Activated CD4-positive, alpha-beta T cell treated with anti-CD3 and anti-CD28 coated beads for 36 hours (primary cell): ENCODE measurements at regions of chr7 and their contacts with region 1.

Region 1: DNA sequence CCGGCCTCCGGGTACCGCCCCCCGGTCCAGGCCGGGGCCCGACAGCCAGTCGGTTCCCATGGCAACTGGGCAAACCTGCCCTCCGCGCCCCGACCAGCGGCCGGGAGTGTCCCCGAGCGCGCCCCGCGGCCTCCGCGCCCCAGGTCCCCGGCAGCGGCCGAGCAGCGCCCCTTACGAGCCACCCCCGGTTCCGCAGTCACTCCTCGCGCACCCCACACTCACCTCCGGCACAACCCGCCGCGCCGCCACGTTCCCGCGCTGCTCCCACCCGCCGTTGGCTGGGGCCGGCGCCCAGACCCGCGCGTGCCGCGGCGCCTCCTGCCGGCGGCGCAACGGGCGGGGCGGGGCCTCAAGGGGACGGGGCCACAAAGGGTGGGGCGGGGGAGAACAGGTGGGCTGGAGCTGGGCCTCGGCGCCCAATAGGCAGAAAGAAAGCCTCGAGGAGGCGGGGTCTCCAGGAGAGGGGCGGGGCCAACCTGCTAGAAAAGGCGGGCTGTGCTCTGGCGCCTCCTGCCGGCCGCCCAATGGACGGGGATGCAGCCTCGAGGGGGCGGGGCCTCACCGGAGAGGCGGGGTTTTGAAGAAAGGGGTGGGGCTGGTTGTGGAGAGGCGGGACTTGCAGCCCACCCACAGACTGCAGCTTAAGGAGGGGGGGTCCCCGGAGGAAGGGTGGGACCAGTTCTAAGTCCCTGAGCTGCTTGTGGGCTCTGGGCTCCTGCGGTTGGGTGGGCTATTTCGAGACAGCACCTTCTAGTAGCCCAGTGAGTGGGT is at the start of gene RADIL:
- DNase-seq: peak; percentile 98
- ATAC-seq: peak; percentile 100
- H3K4me3 Mint-ChIP-seq: peak within 1 kb of the TSS; percentile 64
- H3K27ac Mint-ChIP-seq: no peak within 1 kb of the TSS
- H3K4me1 Mint-ChIP-seq: peaks cover 10% of the 10 kb centered on the region
- H3K27me3 Mint-ChIP-seq: peaks cover 20% of the 10 kb centered on the region
- total RNA-seq, gene RADIL: 0.42 to 0.69 TPM

Region 2: DNA sequence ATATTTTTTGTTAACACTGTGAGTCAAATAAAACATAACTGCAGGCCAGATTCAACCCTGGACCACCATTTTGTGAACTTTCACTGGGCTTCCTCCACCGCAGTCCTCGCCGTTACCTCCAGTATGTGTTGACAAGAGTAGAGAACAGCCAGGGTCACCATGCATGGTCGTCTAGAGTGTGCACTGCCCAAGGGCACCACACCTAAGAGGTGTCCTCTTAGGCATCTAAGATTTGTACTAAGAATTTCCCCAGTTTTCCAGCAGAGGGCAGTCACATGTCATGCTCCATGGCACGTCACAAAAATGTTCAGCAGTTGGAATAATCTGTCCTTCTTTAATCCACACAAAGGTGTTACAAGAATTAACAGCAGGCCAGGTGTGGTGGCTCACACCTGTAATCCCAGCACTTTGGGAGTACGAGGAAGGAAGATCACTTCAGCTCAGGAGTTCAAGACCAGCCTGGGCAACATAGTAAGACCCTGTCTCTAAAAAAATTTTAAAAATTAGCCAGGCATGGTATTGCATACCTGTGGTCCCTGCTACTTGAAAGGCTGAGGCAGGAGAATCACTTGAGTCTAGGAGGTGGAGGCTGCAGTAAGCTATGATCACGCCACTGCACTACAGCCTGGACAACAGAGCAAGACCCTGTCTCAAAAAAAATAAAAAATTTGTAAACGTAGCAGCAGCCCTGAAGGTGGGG is 272.6 kb before region 1 on chr7:
- CTCF ChIA-PET with region 1: no interaction called
- POLR2A ChIA-PET with region 1: no interaction called
- intact Hi-C with region 1: loop called in 1 of 2 experiments (anchors 1 kb)
- DNase-seq: peak; percentile 59
- ATAC-seq: peak; percentile 77
- H3K4me3 Mint-ChIP-seq: no peak overlapping the region
- H3K27ac Mint-ChIP-seq: no peak overlapping the region
- H3K4me1 Mint-ChIP-seq: peaks cover 14% of the 10 kb centered on the region
- H3K27me3 Mint-ChIP-seq: no peaks in the 10 kb centered on the region

Region 3: GRCh38 chr7:4681886-4682620 is 201.5 kb before region 1 on chr7 and contains the start of gene FOXK1:
- CTCF ChIA-PET with region 1: no interaction called
- POLR2A ChIA-PET with region 1: no interaction called
- intact Hi-C with region 1: loop called in 1 of 2 experiments (anchors 2 kb)
- DNase-seq: peak; percentile 90
- ATAC-seq: peak; percentile 78
- H3K4me3 Mint-ChIP-seq: peak within 1 kb of the TSS; percentile 91
- H3K27ac Mint-ChIP-seq: peak within 1 kb of the TSS; percentile 98
- H3K4me1 Mint-ChIP-seq: peaks cover 30% of the 10 kb centered on the region
- H3K27me3 Mint-ChIP-seq: no peaks in the 10 kb centered on the region
- total RNA-seq, gene FOXK1: 30.0 to 33.9 TPM

Region 4: GRCh38 chr7:4791738-4792536 is 91.6 kb before region 1 on chr7:
- CTCF ChIA-PET with region 1: interaction called, 24 read pairs
- POLR2A ChIA-PET with region 1: no interaction called
- intact Hi-C with region 1: loop called (anchors 1 kb)
- DNase-seq: peak; percentile 93
- ATAC-seq: peak; percentile 93
- H3K4me3 Mint-ChIP-seq: no peak overlapping the region
- H3K27ac Mint-ChIP-seq: no peak overlapping the region
- H3K4me1 Mint-ChIP-seq: peaks cover 6% of the 10 kb centered on the region
- H3K27me3 Mint-ChIP-seq: no peaks in the 10 kb centered on the region

Region 5: DNA sequence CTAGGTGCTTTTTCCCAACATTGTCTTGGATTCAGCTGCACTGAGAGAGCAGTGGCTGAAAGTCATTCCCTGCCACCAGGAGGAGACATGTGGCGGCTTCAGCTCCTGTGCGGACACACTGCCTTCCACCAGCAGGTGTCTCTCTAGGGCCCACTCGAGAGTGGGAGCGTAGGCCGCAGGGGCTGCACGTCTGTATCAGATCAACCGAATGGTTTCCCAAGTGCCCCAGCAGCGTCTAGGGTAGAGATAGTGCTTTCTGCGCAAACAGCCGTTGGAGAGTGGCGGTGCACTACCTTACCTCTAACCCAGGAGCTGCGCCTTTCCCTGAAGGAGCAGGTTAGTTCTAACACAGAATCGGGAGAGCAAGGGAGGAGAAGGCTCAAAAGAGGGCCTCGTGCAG is 53.4 kb before region 1 on chr7:
- CTCF ChIA-PET with region 1: interaction called, 10 read pairs
- POLR2A ChIA-PET with region 1: no interaction called
- intact Hi-C with region 1: loop called in 1 of 2 experiments (anchors 1 kb)
- DNase-seq: peak; percentile 81
- ATAC-seq: peak; percentile 93
- H3K4me3 Mint-ChIP-seq: no peak overlapping the region
- H3K27ac Mint-ChIP-seq: no peak overlapping the region
- H3K4me1 Mint-ChIP-seq: peaks cover 2% of the 10 kb centered on the region
- H3K27me3 Mint-ChIP-seq: no peaks in the 10 kb centered on the region

Region 6: DNA sequence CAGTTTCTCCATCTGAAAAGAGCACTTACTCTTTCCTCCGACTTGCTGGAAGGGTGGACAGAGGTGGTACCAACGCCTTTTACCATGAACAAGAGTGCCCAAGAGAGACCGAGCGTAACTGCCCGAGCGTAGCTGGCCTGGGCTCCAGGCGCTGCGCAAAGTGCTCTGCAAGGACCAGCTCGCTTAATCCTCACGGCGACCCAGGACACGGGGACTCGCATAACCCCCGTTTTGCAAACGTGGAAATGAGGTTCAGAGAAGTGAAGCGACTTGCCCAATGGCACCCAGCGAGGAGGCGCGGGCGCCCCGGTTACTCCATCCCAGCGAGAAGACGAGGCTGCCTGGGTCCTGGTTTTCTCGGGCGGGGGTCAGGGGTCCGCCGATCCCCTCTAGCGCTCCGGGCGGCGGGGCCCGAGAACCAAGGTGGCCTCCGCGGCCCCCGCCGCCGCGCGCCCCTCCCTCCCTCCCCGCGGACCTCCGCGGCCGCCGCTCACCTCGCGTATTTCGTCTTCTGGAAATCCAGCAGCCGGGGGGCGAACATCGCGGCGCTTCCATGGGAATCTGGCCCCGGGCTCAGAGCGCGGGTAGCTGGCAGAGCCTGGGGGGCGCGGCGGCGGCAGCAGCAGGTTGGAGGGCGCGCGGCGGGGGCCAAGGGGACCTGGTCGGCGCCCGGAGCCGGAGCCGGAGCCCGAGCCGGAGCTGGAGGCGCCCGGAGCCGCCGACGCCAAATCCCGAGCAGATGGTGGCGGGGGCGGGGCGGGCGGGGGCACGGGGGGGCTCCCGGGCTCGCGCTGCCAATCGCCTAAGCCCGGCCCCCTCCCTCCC is 75.1 kb after region 1 on chr7 and contains the start of gene MMD2:
- CTCF ChIA-PET with region 1: no interaction called
- POLR2A ChIA-PET with region 1: no interaction called
- intact Hi-C with region 1: no loop called
- DNase-seq: no peak
- ATAC-seq: no peak
- H3K4me3 Mint-ChIP-seq: no peak within 1 kb of the TSS
- H3K27ac Mint-ChIP-seq: no peak within 1 kb of the TSS
- H3K4me1 Mint-ChIP-seq: peaks cover 5% of the 10 kb centered on the region
- H3K27me3 Mint-ChIP-seq: peaks cover 31% of the 10 kb centered on the region
- total RNA-seq, gene MMD2: not detected

Region 7: DNA sequence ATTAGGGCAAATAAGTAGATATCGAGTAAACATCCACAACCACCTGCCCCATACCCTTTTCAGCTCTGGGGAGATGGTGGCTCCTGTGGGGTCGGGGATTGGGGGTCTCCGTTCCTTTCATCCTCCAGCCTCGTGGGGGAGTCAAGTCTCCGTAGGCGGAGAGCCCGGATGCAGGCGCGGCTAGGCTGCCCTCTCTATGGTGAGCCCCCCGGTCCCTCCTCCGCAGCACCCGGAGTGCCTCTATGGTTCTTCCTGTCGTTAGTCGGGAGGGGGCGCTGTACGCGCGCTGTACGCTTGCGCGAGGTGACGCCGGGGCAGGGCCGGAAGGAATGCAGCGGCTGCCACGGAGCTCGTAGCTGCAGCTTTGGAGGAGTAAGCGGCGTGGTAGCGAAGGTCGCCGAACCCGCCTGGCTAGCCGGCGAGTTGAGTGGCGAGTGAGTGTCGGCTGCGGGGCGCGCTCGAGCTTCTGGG is 90.2 kb after region 1 on chr7:
- CTCF ChIA-PET with region 1: no interaction called
- POLR2A ChIA-PET with region 1: no interaction called
- intact Hi-C with region 1: loop called in 1 of 2 experiments (anchors 1 kb)
- DNase-seq: peak; percentile 96
- ATAC-seq: peak; percentile 98
- H3K4me3 Mint-ChIP-seq: peak overlapping the region; percentile 97
- H3K27ac Mint-ChIP-seq: peak overlapping the region; percentile 92
- H3K4me1 Mint-ChIP-seq: peaks cover 31% of the 10 kb centered on the region
- H3K27me3 Mint-ChIP-seq: no peaks in the 10 kb centered on the region

Region 8: DNA sequence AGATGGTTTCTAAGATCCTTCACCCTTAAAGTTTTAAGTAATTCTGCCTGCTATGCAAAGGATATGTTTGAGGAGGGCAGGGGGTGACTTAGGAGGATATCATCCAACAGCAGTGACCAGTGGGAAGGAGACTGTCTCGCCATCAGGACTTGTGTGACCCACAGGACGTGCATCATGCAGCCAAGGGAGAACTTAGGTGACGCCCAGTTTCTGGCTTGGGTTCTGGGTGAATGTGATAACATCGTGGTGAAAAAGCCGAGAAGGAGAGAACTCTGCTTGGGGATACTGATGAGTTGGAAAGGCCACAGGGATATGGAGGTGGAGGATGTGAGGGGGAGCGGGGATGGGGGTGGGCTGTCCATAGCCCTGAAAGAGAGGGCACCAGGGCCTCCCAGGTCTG is 310.3 kb after region 1 on chr7:
- CTCF ChIA-PET with region 1: no interaction called
- POLR2A ChIA-PET with region 1: no interaction called
- intact Hi-C with region 1: loop called in 1 of 2 experiments (anchors 1 kb)
- DNase-seq: no peak
- ATAC-seq: no peak
- H3K4me3 Mint-ChIP-seq: no peak overlapping the region
- H3K27ac Mint-ChIP-seq: peak overlapping the region; percentile 6
- H3K4me1 Mint-ChIP-seq: peaks cover 21% of the 10 kb centered on the region
- H3K27me3 Mint-ChIP-seq: no peaks in the 10 kb centered on the region